OCI-LY7 (cell line): ENCODE measurements at regions of chr16 and their contacts with region 1.

Region 1: DNA sequence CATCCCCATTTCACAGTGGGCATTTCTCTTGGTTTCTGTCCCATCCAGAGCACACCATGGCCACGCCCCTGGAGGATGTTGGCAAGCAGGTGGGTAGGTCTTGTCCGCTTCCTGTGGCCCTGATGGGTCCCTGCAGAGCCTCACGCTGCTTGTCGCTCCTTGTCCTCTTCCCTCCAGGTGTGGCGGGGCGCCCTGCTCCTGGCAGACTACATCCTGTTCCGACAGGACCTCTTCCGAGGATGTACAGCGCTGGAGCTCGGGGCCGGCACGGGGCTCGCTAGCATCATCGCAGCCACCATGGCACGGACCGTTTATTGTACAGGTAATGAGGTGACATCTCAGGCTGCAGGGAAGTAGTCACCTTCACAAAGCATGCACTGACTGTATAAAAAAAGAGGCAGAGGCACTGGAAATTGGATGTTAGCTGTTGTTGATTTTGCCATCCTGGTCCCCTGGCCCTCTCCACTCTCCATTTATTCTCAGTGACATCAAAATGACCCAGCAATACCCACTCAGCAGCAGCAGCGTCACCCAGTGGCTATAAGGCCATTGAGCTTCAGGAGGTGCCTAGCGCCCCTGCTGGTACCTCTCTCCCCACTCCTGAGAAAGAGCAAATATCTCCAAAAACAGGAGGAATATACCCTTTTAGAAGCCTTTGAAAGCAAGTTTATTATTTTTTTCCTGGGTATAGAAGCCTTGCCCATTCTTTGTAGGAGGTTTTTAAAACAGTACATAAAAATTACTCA is 13.7 kb downstream of the METTL22 start:
- DNase-seq: peak; percentile 48
- H3K4me3 ChIP-seq: no peak overlapping the region
- H3K27ac ChIP-seq: no peak overlapping the region
- H3K4me1 ChIP-seq: no peaks in the 10 kb centered on the region
- CTCF ChIP-seq: peak; percentile 93

Region 2: DNA sequence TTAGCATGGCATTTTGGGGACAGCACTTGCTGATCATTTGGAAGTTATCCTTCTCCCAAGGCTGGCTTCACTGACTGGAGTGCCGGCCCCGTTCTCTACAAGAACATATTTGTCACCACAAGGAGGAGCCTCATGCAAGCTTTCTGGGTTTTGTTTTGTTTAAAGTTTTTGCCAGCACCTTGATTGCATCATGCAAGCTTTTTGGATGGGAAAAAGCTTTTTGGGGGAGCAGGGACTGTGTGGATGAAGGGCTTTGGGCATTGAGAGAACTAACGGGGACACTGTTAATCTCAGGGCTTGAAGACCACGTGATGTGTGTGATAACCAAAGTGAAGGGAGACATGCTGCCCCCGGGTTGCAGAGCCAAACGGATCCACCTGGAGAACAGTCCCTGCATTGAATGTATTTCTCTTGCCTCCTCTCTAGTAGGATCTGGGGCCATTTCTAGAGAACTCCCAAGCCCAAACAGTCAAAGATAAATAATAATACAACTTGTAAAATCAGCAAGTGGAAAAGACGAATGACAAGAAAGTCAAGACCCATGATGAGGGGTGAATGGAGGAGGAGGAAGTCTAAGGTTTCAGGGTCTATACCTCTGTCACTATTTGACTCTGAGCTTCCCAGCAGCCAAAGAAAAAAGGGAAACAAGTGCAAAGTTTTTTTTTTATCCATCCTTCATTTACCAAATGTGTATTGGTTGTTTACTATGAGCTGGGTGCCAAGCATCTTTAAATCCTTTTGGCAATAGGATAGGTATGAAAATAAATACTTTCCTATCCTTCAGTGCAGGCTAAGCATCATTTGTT is 62.0 kb before region 1 on chr16:
- CTCF ChIA-PET with region 1: no interaction called
- POLR2A ChIA-PET with region 1: no interaction called
- intact Hi-C with region 1: loop called (anchors 5 kb)
- DNase-seq: peak; percentile 46
- H3K4me3 ChIP-seq: no peak overlapping the region
- H3K27ac ChIP-seq: no peak overlapping the region
- H3K4me1 ChIP-seq: no peaks in the 10 kb centered on the region
- CTCF ChIP-seq: peak; percentile 71

Region 3: GRCh38 chr16:8740775-8741355 is 105.7 kb after region 1 on chr16:
- CTCF ChIA-PET with region 1: no interaction called
- POLR2A ChIA-PET with region 1: no interaction called
- intact Hi-C with region 1: no loop called
- DNase-seq: no peak
- H3K4me3 ChIP-seq: no peak overlapping the region
- H3K27ac ChIP-seq: no peak overlapping the region
- H3K4me1 ChIP-seq: no peaks in the 10 kb centered on the region
- CTCF ChIP-seq: no peak